Right lobe of liver (tissue), 6 donors: ENCODE measurements at regions of chr4 and their contacts with region 1.

Region 1: DNA sequence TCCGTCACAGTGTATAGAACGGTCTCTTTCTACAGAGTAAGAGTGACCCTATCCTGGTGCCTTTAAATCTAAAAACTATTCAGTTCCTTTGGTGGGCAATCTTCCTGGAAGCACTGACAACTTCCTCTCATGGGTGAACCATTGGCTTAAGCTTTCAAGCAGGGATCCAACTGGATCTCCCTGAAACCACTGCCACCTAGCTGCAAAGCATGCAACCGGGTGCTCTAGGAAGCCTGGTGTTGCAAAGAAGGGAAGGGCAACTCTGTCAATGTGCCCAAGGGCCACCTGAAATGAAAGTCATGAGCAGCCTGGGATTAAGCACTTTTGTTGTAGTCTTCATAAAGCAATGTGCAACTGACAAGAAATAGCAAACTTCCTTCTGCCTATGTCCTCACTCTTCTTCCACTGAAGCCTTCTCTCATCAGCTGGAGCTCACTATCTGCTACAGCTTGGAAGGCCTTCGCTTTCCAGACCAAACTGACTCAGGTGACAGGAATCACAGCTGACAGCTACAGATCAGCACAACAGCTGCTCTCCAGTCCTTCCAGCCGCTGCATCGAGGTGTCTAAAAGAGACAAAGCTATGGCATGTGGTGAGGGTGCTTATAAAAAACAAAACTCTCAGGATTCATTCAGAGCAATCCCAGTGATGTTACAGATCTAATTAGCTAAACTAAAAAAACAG is 46.1 kb downstream of the SETD7 start:
- DNase-seq: peak; percentile 49 to 67 (median 67)
- ATAC-seq: peak; percentile 84 to 96 (median 92)
- H3K4me3 ChIP-seq: no peak overlapping the region
- H3K27ac ChIP-seq: peak overlapping the region in 1 of 3 donors; percentile 21
- H3K4me1 ChIP-seq: peaks cover 0 to 25% (median 7%) of the 10 kb centered on the region in 4 donors
- H3K27me3 ChIP-seq: no peaks in the 10 kb centered on the region
- CTCF ChIP-seq: peak; percentile 53 to 77 (median 64)
- POLR2A ChIP-seq: no peak

Region 2: DNA sequence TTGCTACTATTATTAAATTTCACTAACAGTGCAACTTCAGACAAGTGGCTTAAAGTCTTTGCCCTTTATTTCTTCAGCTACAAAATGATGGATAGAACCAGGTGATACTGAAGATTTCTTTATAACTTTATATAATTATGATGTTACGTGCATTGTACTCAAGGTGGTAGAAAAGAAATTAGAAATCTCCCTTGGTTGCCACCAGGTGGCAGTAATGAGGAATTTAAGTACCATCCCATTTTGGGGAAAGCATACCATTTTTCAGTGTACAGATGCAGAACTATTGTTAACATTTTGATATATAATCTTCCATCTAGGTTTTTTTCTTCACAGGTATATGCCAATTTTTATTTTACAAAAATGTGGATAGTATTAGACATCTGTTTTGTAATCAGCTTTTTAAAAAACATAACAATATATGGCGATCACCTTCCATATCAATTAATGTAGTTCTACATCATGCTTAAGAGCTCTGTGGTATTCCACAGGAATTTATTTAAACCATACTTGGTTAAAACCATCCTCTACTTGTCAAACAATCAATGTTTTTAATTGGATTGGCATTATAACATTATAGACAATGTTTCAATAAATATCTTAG is 93.7 kb before region 1 on chr4:
- intact Hi-C with region 1: loop called in 1 of 2 experiments (anchors 10 kb)
- DNase-seq: no peak
- ATAC-seq: peak; percentile 47 to 70 (median 60)
- H3K4me3 ChIP-seq: no peak overlapping the region
- H3K27ac ChIP-seq: no peak overlapping the region
- H3K4me1 ChIP-seq: peaks cover 0 to 18% (median 0%) of the 10 kb centered on the region in 4 donors
- H3K27me3 ChIP-seq: no peaks in the 10 kb centered on the region
- CTCF ChIP-seq: peak; percentile 60 to 83 (median 78)
- POLR2A ChIP-seq: no peak